ENCODE measurements at regions of chr14 and their contacts with region 1.

Region 1: GRCh38 chr14:61525293-61526011 is 169.9 kb upstream of the HIF1A start:
- DNase-seq: peak in 6 of 9 experiments; percentile 41 to 74 (median 62)
- ATAC-seq: peak; percentile 59
- H3K4me3 ChIP-seq: no peak overlapping the region
- H3K4me3 Mint-ChIP-seq: peak overlapping the region; percentile 33
- H3K27ac ChIP-seq: peak overlapping the region; percentile 13 to 67
- H3K27ac Mint-ChIP-seq: peak overlapping the region; percentile 84
- H3K4me1 ChIP-seq: peaks cover 44% of the 10 kb centered on the region
- H3K4me1 Mint-ChIP-seq: peaks cover 78% of the 10 kb centered on the region
- H3K27me3 ChIP-seq: no peaks in the 10 kb centered on the region
- H3K27me3 Mint-ChIP-seq: no peaks in the 10 kb centered on the region
- CTCF ChIP-seq: no peak

Region 2: GRCh38 chr14:60485598-60486251 is 1039.7 kb before region 1 on chr14 and contains the start of gene C14orf39:
- CTCF ChIA-PET with region 1: no interaction called
- POLR2A ChIA-PET with region 1: no interaction called
- intact Hi-C with region 1: no loop called
- DNase-seq: peak in 1 of 9 experiments; percentile 27
- ATAC-seq: peak; percentile 46
- H3K4me3 ChIP-seq: peak within 1 kb of the TSS in 1 of 2 experiments; percentile 17
- H3K4me3 Mint-ChIP-seq: peak within 1 kb of the TSS; percentile 35
- H3K27ac ChIP-seq: no peak within 1 kb of the TSS
- H3K27ac Mint-ChIP-seq: no peak within 1 kb of the TSS
- H3K4me1 ChIP-seq: peaks cover 7% of the 10 kb centered on the region
- H3K4me1 Mint-ChIP-seq: peaks cover 5% of the 10 kb centered on the region
- H3K27me3 ChIP-seq: peaks cover 12 to 22% of the 10 kb centered on the region in 2 experiments
- H3K27me3 Mint-ChIP-seq: peaks cover 30% of the 10 kb centered on the region
- CTCF ChIP-seq: no peak
- total RNA-seq, gene C14orf39: not detected

Region 3: GRCh38 chr14:61509201-61509600 is 16.3 kb before region 1 on chr14:
- CTCF ChIA-PET with region 1: interaction called, 3 read pairs
- POLR2A ChIA-PET with region 1: interaction called, 3 read pairs
- intact Hi-C with region 1: loop called in 1 of 2 experiments (anchors 2 kb)
- DNase-seq: no peak
- ATAC-seq: no peak
- H3K4me3 ChIP-seq: no peak overlapping the region
- H3K4me3 Mint-ChIP-seq: no peak overlapping the region
- H3K27ac ChIP-seq: no peak overlapping the region
- H3K27ac Mint-ChIP-seq: no peak overlapping the region
- H3K4me1 ChIP-seq: peaks cover 84% of the 10 kb centered on the region
- H3K4me1 Mint-ChIP-seq: peaks cover 87% of the 10 kb centered on the region
- H3K27me3 ChIP-seq: no peaks in the 10 kb centered on the region
- H3K27me3 Mint-ChIP-seq: no peaks in the 10 kb centered on the region
- CTCF ChIP-seq: no peak

Region 4: GRCh38 chr14:61537563-61538463 is 12.4 kb after region 1 on chr14:
- CTCF ChIA-PET with region 1: interaction called, 3 read pairs
- POLR2A ChIA-PET with region 1: interaction called, 5 read pairs
- intact Hi-C with region 1: loop called in 1 of 2 experiments (anchors 1 kb)
- DNase-seq: peak in 4 of 9 experiments; percentile 31 to 46 (median 40)
- ATAC-seq: peak; percentile 48
- H3K4me3 ChIP-seq: no peak overlapping the region
- H3K4me3 Mint-ChIP-seq: no peak overlapping the region
- H3K27ac ChIP-seq: peak overlapping the region in 1 of 2 experiments; percentile 44
- H3K27ac Mint-ChIP-seq: peak overlapping the region; percentile 87
- H3K4me1 ChIP-seq: no peaks in the 10 kb centered on the region
- H3K4me1 Mint-ChIP-seq: peaks cover 51% of the 10 kb centered on the region
- H3K27me3 ChIP-seq: no peaks in the 10 kb centered on the region
- H3K27me3 Mint-ChIP-seq: no peaks in the 10 kb centered on the region
- CTCF ChIP-seq: no peak

Region 5: DNA sequence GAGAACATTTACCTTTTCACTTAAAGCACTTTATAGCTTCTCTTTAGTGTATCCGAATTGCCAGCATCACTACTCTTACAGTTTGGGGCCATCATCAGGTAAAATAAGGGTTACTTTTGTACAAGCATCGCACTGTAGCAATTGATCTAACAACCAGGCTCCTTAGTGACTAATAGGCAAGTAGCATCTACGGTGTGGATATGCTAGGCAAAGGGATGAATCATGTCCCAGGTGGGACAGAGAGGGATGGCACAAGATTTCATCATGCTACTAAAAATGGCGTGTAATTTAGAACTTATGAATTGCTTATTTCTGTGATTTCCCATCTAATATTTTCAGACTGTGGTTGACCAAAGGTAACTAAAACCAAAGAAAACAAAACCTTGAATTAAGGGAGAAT is 937.5 kb after region 1 on chr14:
- CTCF ChIA-PET with region 1: no interaction called
- POLR2A ChIA-PET with region 1: no interaction called
- intact Hi-C with region 1: no loop called
- DNase-seq: no peak
- ATAC-seq: no peak
- H3K4me3 ChIP-seq: no peak overlapping the region
- H3K4me3 Mint-ChIP-seq: no peak overlapping the region
- H3K27ac ChIP-seq: no peak overlapping the region
- H3K27ac Mint-ChIP-seq: no peak overlapping the region
- H3K4me1 ChIP-seq: no peaks in the 10 kb centered on the region
- H3K4me1 Mint-ChIP-seq: no peaks in the 10 kb centered on the region
- H3K27me3 ChIP-seq: no peaks in the 10 kb centered on the region
- H3K27me3 Mint-ChIP-seq: no peaks in the 10 kb centered on the region
- CTCF ChIP-seq: no peak

Measured in CD8-positive, alpha-beta T cell (primary cell).